ENCODE measurements at regions of chr16 and their contacts with region 1.

Region 1: DNA sequence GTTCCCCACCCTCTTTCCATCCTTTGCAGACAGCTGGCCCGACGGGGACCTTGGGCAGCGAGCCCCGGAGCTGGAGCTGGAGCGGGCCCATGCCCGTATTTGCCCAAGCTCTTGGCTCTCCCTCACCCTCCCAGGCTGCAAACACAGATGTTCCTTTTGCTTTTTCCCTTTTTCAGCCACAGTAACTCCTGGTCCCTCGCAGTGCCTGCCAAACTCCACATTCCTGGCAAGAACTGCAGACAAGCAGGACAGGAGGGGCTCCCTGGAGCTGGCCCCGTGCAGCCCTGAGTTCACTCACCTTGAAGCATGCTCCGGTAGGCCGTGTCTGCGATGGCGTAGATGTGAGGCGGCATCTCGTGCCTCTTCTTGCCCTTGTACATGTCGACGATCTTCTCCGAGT is 33.9 kb downstream of the MYH11 start:
- DNase-seq: peak; percentile 49 to 89
- H3K4me3 ChIP-seq: peak overlapping the region in 1 of 2 donors; percentile 38
- H3K27ac ChIP-seq: peak overlapping the region; percentile 77 to 90
- H3K4me1 ChIP-seq: peaks cover 37 to 63% of the 10 kb centered on the region in 2 donors
- H3K27me3 ChIP-seq: no peaks in the 10 kb centered on the region
- CTCF ChIP-seq: no peak

Region 2: GRCh38 chr16:15466886-15467781 is 355.8 kb before region 1 on chr16:
- intact Hi-C with region 1: no loop called
- DNase-seq: no peak
- H3K4me3 ChIP-seq: no peak overlapping the region
- H3K27ac ChIP-seq: no peak overlapping the region
- H3K4me1 ChIP-seq: no peaks in the 10 kb centered on the region
- H3K27me3 ChIP-seq: no peaks in the 10 kb centered on the region
- CTCF ChIP-seq: peak in 2 of 3 experiments; percentile 10 to 22

Region 3: GRCh38 chr16:15777533-15778203 is 45.3 kb before region 1 on chr16:
- intact Hi-C with region 1: loop called (anchors 5 kb)
- DNase-seq: no peak
- H3K4me3 ChIP-seq: no peak overlapping the region
- H3K27ac ChIP-seq: peak overlapping the region; percentile 52 to 54
- H3K4me1 ChIP-seq: peaks cover 5 to 33% of the 10 kb centered on the region in 2 donors
- H3K27me3 ChIP-seq: no peaks in the 10 kb centered on the region
- CTCF ChIP-seq: peak in 1 of 3 experiments; percentile 13

Region 4: DNA sequence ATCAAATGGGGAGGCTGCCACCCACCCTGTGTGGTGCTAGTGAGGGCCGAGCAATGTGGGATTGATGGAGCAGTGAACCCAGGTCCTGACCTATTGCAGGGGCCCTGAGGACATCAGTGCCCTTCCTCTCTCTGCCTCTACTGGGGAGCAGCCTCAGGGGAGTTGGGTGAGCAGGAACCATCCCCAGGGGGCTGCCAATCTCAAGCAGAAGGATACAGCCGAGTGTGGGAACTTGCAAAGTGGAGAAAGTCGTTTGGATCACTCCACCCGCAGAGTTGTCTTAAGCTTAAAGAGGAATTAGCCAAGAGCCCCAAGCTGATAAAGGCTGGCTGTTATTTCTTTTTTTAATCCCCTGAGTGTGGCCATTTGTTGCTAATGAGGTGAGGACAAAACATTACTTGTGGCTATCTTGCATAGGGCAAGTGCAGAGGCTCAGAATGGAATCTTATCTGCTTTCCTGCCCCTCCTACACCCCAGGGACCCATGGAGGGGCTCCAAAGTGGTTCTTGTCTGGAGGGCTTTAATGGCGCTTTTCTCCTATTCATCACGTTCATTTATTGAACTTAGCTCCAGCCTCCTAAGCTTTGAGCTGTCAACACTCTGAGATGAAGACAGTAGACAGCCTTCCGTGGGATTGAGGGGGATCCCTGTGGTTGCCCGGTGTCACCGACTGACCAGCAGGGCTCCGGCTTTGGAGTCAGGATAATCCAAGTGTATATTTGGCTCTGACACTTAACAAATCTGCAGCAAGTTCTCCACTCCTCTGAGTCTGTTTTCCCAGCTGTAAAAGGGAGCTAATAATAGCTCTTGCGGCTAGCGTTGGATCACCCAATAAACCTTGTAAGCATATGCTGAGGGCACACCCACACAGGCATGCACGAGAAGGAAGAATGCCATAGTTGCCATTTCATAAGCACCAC is 11.2 kb before region 1 on chr16:
- intact Hi-C with region 1: loop called (anchors 1 kb)
- DNase-seq: peak; percentile 36 to 91
- H3K4me3 ChIP-seq: peak overlapping the region in 1 of 2 donors; percentile 40
- H3K27ac ChIP-seq: peak overlapping the region; percentile 85 to 92
- H3K4me1 ChIP-seq: peaks cover 43 to 67% of the 10 kb centered on the region in 2 donors
- H3K27me3 ChIP-seq: no peaks in the 10 kb centered on the region
- CTCF ChIP-seq: peak in 2 of 3 experiments; percentile 7 to 16

Region 5: GRCh38 chr16:15847611-15848175 is 24.7 kb after region 1 on chr16:
- intact Hi-C with region 1: no loop called
- DNase-seq: no peak
- H3K4me3 ChIP-seq: peak overlapping the region in 1 of 2 donors; percentile 92
- H3K27ac ChIP-seq: peak overlapping the region; percentile 88 to 90
- H3K4me1 ChIP-seq: peaks cover 3 to 56% of the 10 kb centered on the region in 2 donors
- H3K27me3 ChIP-seq: no peaks in the 10 kb centered on the region
- CTCF ChIP-seq: no peak

Region 6: GRCh38 chr16:15857724-15858560 is 35.0 kb after region 1 on chr16:
- intact Hi-C with region 1: loop called (anchors 5 kb)
- DNase-seq: peak; percentile 25 to 86
- H3K4me3 ChIP-seq: peak overlapping the region; percentile 71 to 92
- H3K27ac ChIP-seq: peak overlapping the region; percentile 88 to 92
- H3K4me1 ChIP-seq: peaks cover 0 to 3% of the 10 kb centered on the region in 2 donors
- H3K27me3 ChIP-seq: no peaks in the 10 kb centered on the region
- CTCF ChIP-seq: peak in 1 of 3 experiments; percentile 1